Transverse colon (tissue), 4 donors: ENCODE measurements at regions of chr16 and their contacts with region 1.

Region 1: GRCh38 chr16:63922560-63922959 is 1199.3 kb downstream of the CDH11 start:
- DNase-seq: no peak
- H3K4me3 ChIP-seq: no peak overlapping the region
- H3K27ac ChIP-seq: no peak overlapping the region
- H3K4me1 ChIP-seq: no peaks in the 10 kb centered on the region
- H3K27me3 ChIP-seq: no peaks in the 10 kb centered on the region
- CTCF ChIP-seq: no peak
- EP300 ChIP-seq: no peak
- POLR2A ChIP-seq: no peak

Region 2: GRCh38 chr16:63816276-63816675 is 106.3 kb before region 1 on chr16:
- in situ Hi-C with region 1: loop called in 1 of 4 experiments (anchors 25 kb)
- intact Hi-C with region 1: no loop called
- DNase-seq: no peak
- H3K4me3 ChIP-seq: no peak overlapping the region
- H3K27ac ChIP-seq: no peak overlapping the region
- H3K4me1 ChIP-seq: no peaks in the 10 kb centered on the region
- H3K27me3 ChIP-seq: no peaks in the 10 kb centered on the region
- CTCF ChIP-seq: no peak
- EP300 ChIP-seq: no peak
- POLR2A ChIP-seq: no peak

Region 3: DNA sequence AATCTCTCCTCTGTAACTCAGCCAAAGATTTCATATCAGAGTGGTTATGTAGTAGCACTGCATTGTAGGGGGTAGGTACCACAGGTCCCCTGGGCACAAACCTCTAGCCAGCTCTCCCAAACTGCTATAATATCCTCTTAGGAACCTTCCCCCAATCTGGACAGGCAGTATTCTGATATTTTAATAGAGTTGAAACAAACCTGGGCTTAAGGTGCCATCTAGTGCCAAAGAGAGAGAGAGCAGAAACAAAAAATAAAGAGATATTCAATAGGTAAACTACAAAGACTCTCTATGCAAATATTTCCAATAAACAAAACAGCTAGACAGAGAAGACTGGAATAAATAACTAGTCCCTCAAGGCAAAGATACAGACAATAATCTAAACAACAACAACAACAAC is 129.3 kb after region 1 on chr16:
- in situ Hi-C with region 1: no loop called
- intact Hi-C with region 1: no loop called
- DNase-seq: no peak
- H3K4me3 ChIP-seq: no peak overlapping the region
- H3K27ac ChIP-seq: no peak overlapping the region
- H3K4me1 ChIP-seq: no peaks in the 10 kb centered on the region
- H3K27me3 ChIP-seq: no peaks in the 10 kb centered on the region
- CTCF ChIP-seq: no peak
- EP300 ChIP-seq: no peak
- POLR2A ChIP-seq: no peak

Region 4: DNA sequence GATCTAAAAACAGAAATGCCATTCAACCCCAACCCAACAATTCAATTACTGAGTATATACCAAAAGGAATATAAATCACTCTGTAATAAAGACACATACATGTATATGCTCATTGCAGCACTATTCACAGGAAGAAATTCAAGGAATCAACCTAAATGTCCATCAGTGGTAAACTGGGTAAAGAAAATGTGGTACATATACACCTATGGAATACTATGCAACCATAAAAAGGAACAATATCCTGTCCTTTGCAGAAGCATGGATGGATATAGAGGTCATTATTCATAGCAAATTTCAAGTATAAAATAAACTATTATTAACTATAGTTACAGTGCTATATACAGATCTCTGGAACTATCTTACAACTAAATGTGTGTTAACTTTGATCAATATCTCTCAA is 600.0 kb after region 1 on chr16:
- in situ Hi-C with region 1: no loop called
- intact Hi-C with region 1: no loop called
- DNase-seq: no peak
- H3K4me3 ChIP-seq: no peak overlapping the region
- H3K27ac ChIP-seq: no peak overlapping the region
- H3K4me1 ChIP-seq: no peaks in the 10 kb centered on the region
- H3K27me3 ChIP-seq: no peaks in the 10 kb centered on the region
- CTCF ChIP-seq: no peak
- EP300 ChIP-seq: no peak
- POLR2A ChIP-seq: no peak